Common myeloid progenitor, CD34-positive (primary cell): ENCODE measurements at regions of chr1 and their contacts with region 1.

Region 1: GRCh38 chr1:244325056-244325764 is 126.5 kb downstream of the ADSS2 start:
- DNase-seq: peak; percentile 51 to 89 (median 76)
- H3K4me3 ChIP-seq: peak overlapping the region in 5 of 7 experiments; percentile 19 to 83 (median 58)
- H3K27ac ChIP-seq: peak overlapping the region; percentile 67 to 85
- H3K4me1 ChIP-seq: peaks cover 23 to 54% (median 49%) of the 10 kb centered on the region in 4 experiments
- H3K27me3 ChIP-seq: no peaks in the 10 kb centered on the region

Region 2: GRCh38 chr1:244197906-244198305 is 127.3 kb before region 1 on chr1:
- CTCF ChIA-PET with region 1: no interaction called
- POLR2A ChIA-PET with region 1: no interaction called
- DNase-seq: no peak
- H3K4me3 ChIP-seq: no peak overlapping the region
- H3K27ac ChIP-seq: no peak overlapping the region
- H3K4me1 ChIP-seq: no peaks in the 10 kb centered on the region
- H3K27me3 ChIP-seq: no peaks in the 10 kb centered on the region

Region 3: DNA sequence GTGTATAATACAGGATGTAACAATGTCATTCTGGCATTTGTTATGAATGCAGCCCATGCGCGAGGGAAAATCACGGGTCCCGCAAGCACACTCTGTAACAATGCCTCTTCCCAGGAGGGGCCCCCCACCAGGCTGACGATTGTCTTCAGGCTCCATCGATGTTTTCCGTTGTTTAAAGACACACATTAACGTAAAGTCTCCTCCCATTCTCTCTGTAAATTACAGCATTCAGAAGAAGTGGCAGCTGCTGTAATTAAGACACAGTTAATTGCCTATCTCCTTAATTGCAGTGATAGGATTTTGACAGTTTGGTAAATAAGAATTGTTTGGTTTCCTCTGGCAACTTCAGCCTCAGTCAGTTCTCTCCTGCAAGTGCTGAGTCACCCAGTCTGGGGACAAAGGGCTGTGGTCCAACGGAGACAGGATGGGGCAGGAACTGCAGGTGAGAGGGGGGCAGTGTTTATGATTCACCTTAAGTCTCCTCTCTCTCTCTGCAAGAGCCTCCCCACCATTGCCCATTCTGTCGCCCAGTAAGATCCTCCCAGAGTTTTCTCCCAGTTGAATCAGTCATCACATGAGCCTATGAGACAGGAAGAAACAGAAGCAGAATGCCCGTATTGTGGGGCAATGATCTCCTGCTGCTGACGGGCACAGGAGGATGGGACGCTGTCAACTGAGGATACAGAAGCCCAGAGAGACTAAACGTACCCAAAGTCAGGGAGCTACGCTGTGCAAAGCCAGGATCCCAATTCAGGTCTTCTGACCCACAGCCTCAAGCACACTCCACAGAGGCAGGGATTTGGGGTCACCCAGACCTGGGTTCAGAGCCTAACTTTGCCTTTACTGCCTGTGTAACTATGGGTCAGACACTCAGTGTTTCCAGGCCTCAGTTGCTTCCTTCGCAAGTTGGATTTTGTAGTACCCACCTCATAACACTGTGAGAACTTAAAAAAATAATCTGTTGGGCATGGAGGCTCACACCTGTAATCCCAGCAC is 16.5 kb after region 1 on chr1:
- CTCF ChIA-PET with region 1: interaction called, 12 read pairs
- POLR2A ChIA-PET with region 1: interaction called, 3 read pairs
- DNase-seq: peak; percentile 59 to 93 (median 93)
- H3K4me3 ChIP-seq: peak overlapping the region in 2 of 7 experiments; percentile 38 to 39
- H3K27ac ChIP-seq: peak overlapping the region in 1 of 2 experiments; percentile 75
- H3K4me1 ChIP-seq: peaks cover 0 to 20% (median 15%) of the 10 kb centered on the region in 4 experiments
- H3K27me3 ChIP-seq: no peaks in the 10 kb centered on the region